ENCODE measurements at regions of chr14 and their contacts with region 1.

Region 1: DNA sequence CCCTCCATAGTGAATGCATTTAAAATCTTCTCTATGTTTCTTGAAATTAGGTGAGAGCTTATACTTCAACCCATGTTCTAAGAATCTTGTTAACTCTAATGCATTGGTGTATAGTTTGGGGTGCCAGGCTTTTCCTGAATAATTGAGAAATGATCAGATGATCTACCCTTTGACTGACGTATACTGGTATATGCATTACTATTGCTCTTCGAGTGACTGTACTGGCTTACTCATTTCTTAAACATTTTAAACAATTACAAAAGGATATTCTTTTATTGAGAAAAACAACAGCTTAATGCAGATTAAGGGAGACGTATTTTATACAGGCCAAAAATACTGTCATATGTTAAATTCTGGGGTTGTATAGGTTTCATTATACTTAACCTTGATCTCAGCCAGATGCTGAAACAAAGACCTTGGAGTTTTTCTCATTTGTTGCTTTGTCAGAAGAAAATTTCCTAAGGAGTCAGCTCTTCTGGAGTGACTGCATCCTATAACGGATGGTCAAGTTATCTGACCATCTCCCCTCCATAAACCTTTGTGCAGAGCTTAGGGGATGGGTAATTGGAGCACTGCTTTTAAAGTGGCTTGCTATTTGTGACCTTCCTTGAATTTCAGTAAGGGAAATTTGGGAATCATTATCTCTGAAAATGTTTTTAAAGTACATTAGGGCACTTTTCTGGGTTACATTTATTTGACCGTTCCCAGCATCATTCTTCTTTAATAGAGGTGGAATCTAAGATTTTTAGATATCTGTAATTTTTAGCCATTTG is 507.6 kb downstream of the PCNX1 start:
- DNase-seq: no peak
- H3K4me3 Mint-ChIP-seq: no peak overlapping the region
- H3K27ac Mint-ChIP-seq: no peak overlapping the region
- H3K4me1 Mint-ChIP-seq: peaks cover 38% of the 10 kb centered on the region
- H3K27me3 Mint-ChIP-seq: no peaks in the 10 kb centered on the region

Region 2: DNA sequence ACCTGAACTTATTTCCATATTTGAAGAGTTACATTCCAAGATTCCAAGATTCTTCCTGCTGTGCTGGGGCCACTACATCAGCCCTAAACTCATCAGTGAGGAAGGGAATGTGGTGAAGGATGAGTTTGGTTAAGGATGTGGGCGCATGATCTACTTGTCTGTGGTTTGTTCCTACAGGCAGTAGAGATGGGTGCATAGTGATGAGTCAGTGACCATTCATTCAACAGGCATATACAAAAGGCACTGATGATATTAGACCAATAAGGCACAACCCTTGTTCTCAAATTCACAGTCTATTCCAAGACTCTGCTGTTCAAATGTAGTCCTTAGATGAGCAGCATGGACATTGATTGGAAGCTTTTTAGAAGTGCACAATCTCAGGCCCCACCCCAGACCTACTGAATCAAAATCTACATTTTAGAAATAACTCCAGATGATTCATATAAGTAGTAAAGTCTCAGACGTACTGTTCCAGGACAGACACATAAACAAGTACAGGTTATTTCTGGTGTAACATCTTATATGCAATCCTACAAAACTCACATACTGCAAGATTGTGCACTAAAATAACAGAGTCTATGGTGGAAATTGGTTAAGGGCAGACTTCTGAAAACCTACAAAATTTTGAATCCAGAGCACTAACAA is 557.8 kb before region 1 on chr14:
- intact Hi-C with region 1: no loop called
- DNase-seq: no peak
- H3K4me3 Mint-ChIP-seq: no peak overlapping the region
- H3K27ac Mint-ChIP-seq: no peak overlapping the region
- H3K4me1 Mint-ChIP-seq: peaks cover 10% of the 10 kb centered on the region
- H3K27me3 Mint-ChIP-seq: peaks cover 2% of the 10 kb centered on the region

Region 3: DNA sequence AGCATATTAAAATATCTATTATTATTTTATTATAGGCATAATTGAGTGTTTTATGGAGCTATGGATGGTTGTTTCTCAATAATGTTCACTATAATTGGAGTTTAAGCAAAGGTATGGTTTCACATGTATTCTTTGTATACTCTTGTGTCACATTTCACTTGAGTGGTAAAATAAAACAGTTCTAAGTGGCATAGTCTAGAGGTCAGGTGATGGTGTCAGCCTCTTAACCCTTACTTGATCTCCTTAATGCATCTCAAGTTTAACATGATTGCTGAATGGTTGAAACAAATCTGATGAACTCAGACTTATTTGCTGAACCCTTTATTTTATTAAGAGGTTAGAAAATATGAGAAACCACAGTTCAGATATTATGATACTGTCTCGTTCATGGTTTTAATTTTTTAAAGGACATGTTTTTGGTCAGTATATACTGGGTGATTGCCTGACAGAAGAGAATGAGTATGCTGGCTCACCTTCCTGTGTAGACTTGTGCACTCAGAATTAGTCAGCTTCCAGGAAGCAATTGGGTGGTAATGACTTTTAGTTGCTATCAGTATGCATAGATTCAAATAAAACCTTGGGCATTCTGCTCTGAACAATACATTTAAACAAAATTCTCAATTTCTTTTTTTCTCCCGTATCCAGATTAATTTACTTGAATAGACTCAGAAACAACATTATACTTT is 43.0 kb before region 1 on chr14:
- intact Hi-C with region 1: loop called (anchors 5 kb)
- DNase-seq: no peak
- H3K4me3 Mint-ChIP-seq: no peak overlapping the region
- H3K27ac Mint-ChIP-seq: peak overlapping the region; percentile 71
- H3K4me1 Mint-ChIP-seq: peaks cover 26% of the 10 kb centered on the region
- H3K27me3 Mint-ChIP-seq: no peaks in the 10 kb centered on the region

Region 4: GRCh38 chr14:71452539-71452938 is 37.7 kb after region 1 on chr14:
- intact Hi-C with region 1: loop called (anchors 5 kb)
- DNase-seq: no peak
- H3K4me3 Mint-ChIP-seq: no peak overlapping the region
- H3K27ac Mint-ChIP-seq: peak overlapping the region; percentile 14
- H3K4me1 Mint-ChIP-seq: peaks cover 32% of the 10 kb centered on the region
- H3K27me3 Mint-ChIP-seq: no peaks in the 10 kb centered on the region

Region 5: GRCh38 chr14:71472043-71472960 is 57.5 kb after region 1 on chr14:
- intact Hi-C with region 1: loop called (anchors 5 kb)
- DNase-seq: no peak
- H3K4me3 Mint-ChIP-seq: no peak overlapping the region
- H3K27ac Mint-ChIP-seq: peak overlapping the region; percentile 70
- H3K4me1 Mint-ChIP-seq: peaks cover 64% of the 10 kb centered on the region
- H3K27me3 Mint-ChIP-seq: no peaks in the 10 kb centered on the region

Region 6: DNA sequence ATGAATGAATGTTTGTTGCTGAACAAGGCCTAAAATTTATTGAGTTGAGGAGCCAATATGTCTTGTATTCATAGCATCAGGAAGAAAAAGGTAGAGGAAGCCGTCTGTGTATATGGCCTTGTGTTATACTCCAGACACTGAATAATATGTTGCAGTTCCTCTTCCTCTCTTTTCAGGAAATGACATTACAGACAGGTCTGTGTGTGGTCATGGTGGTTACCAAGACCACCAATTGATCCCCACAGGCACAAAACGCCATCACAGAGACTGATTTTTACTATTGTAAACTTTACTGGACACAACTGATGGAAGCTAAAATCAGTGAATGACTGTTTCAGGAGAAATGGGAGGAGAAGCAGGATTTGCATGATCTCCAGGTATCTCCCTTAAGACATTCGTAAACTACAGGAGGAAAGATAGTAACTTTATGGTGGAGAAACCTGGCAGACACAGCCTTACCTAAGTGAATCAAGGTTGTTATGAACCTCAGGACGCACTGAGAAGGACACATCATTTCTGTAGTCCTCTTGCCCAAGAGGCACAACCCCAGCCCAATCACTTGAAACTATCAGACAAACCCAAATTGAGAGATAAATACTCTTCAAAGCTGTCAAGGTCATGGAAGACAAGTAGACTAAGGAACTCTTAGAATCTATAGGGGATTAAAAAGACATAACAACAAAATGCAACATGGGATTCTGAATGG is 183.3 kb after region 1 on chr14:
- intact Hi-C with region 1: loop called (anchors 5 kb)
- DNase-seq: no peak
- H3K4me3 Mint-ChIP-seq: peak overlapping the region; percentile 1
- H3K27ac Mint-ChIP-seq: peak overlapping the region; percentile 29
- H3K4me1 Mint-ChIP-seq: peaks cover 63% of the 10 kb centered on the region
- H3K27me3 Mint-ChIP-seq: no peaks in the 10 kb centered on the region